A673 (cell line): ENCODE measurements at regions of chrX and their contacts with region 1.

Region 1: DNA sequence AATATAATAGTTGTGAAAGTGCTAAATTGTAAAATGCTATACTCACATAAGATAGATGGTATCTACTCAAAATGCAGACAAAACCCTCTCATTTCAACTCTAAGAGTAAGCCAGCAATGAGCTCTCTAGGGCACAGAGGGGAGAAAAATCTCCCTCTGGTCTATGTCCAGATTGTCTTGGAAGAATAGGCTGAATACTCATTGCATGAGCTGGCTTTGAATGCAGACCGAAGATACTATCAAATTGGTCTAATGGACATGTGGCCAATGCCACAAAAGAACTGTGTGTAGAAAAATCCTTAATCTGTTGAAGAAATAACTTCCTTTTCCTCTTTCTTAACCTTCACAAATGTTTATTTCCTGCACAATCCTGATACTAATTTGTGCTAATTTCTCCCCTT is 3.5 kb downstream of the ZXDA start:
- DNase-seq: peak; percentile 38
- H3K4me3 ChIP-seq: peak overlapping the region; percentile 23
- H3K27ac ChIP-seq: peak overlapping the region; percentile 44
- H3K4me1 ChIP-seq: peaks cover 20% of the 10 kb centered on the region
- H3K27me3 ChIP-seq: no peaks in the 10 kb centered on the region
- CTCF ChIP-seq: no peak

Region 2: DNA sequence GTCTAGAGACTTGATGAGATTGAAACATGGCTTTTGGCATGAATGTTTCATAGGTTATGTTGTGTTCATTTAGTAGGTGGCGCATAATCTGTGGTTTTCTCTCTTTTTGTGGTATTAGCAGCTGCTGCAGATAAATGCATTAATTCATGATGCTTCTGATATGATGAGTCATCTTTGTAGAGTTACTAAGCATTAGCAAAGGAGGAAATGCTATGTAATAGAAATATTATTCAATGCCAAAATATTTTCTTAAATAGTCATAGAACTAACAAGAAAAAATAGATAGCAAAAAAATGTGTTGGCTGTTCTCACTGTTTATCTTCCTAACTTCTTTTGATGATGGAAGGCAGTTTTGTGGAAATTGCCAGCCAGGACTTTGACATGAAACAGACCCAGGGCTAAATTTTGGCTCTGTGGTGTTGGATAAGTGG is 311.4 kb before region 1 on chrX:
- CTCF ChIA-PET with region 1: no interaction called
- POLR2A ChIA-PET with region 1: no interaction called
- intact Hi-C with region 1: loop called (anchors 5 kb)
- DNase-seq: peak; percentile 24
- H3K4me3 ChIP-seq: peak overlapping the region; percentile 25
- H3K27ac ChIP-seq: no peak overlapping the region
- H3K4me1 ChIP-seq: peaks cover 9% of the 10 kb centered on the region
- H3K27me3 ChIP-seq: no peaks in the 10 kb centered on the region
- CTCF ChIP-seq: no peak